ENCODE measurements at regions of chrX and their contacts with region 1.

Region 1: DNA sequence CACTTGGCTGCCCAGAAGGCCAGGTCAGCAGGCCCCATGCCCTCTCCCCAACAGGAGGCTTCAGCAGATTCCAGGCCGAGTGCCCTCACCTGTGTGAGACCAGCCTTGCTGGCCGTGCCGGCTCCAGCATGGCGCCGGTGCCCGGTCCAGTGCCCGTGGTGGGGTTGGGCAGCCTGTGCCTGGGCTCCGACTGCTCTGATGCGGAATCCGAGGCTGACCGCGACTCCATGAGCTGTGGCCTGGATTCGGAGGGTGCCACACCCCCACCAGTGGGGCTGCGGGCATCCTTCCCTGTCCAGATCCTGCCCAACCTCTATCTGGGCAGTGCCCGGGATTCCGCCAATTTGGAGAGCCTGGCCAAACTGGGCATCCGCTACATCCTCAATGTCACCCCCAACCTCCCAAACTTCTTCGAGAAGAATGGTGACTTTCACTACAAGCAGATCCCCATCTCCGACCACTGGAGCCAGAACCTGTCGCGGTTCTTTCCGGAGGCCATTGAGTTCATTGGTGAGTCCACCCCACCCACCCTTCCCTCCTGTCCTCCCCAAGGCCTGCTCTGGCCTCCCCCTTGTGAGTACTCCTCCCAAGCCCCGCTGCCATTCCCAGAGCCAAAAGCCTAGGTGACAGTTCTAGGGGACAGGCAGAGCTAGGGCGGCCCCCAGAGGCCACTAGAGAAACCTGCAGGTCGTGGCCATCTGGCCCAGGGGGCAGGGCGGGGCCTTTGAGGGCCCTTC is 2.3 kb downstream of the DUSP9 start:
- DNase-seq: no peak
- ATAC-seq: peak; percentile 68
- H3K4me3 ChIP-seq: no peak overlapping the region
- H3K27ac ChIP-seq: no peak overlapping the region
- H3K4me1 ChIP-seq: peaks cover 0 to 14% of the 10 kb centered on the region in 2 experiments; a peak in 2 of 4 replicates
- H3K27me3 ChIP-seq: no peaks in the 10 kb centered on the region
- CTCF ChIP-seq: peak in 2 of 3 experiments; percentile 44 to 46; a peak in 4 of 6 replicates
- POLR2A ChIP-seq: no peak
- RAD21 ChIP-seq: no peak

Region 2: GRCh38 chrX:153539171-153539978 is 110.0 kb before region 1 on chrX:
- CTCF ChIA-PET with region 1: interaction called, 5 read pairs
- POLR2A ChIA-PET with region 1: no interaction called
- RAD21 ChIA-PET with region 1: no interaction called
- intact Hi-C with region 1: loop called (anchors 1 kb)
- DNase-seq: peak; percentile 24
- ATAC-seq: peak; percentile 96
- H3K4me3 ChIP-seq: no peak overlapping the region
- H3K27ac ChIP-seq: no peak overlapping the region
- H3K4me1 ChIP-seq: peaks cover 0 to 5% of the 10 kb centered on the region in 2 experiments; a peak in 1 of 4 replicates
- H3K27me3 ChIP-seq: no peaks in the 10 kb centered on the region
- CTCF ChIP-seq: peak in 2 of 3 experiments; percentile 75 to 87; a peak in 4 of 6 replicates
- POLR2A ChIP-seq: no peak
- RAD21 ChIP-seq: no peak

Region 3: GRCh38 chrX:153554519-153555167 is 94.7 kb before region 1 on chrX:
- CTCF ChIA-PET with region 1: no interaction called
- POLR2A ChIA-PET with region 1: no interaction called
- RAD21 ChIA-PET with region 1: no interaction called
- intact Hi-C with region 1: loop called (anchors 1 kb)
- DNase-seq: peak; percentile 24
- ATAC-seq: peak; percentile 93
- H3K4me3 ChIP-seq: no peak overlapping the region
- H3K27ac ChIP-seq: no peak overlapping the region
- H3K4me1 ChIP-seq: no peaks in the 10 kb centered on the region
- H3K27me3 ChIP-seq: no peaks in the 10 kb centered on the region
- CTCF ChIP-seq: peak; percentile 56 to 75 (median 59)
- POLR2A ChIP-seq: no peak
- RAD21 ChIP-seq: peak; percentile 74

Measured in HCT116 (cell line).